PC-3 (cell line): ENCODE measurements at regions of chr14 and their contacts with region 1.

Region 1: DNA sequence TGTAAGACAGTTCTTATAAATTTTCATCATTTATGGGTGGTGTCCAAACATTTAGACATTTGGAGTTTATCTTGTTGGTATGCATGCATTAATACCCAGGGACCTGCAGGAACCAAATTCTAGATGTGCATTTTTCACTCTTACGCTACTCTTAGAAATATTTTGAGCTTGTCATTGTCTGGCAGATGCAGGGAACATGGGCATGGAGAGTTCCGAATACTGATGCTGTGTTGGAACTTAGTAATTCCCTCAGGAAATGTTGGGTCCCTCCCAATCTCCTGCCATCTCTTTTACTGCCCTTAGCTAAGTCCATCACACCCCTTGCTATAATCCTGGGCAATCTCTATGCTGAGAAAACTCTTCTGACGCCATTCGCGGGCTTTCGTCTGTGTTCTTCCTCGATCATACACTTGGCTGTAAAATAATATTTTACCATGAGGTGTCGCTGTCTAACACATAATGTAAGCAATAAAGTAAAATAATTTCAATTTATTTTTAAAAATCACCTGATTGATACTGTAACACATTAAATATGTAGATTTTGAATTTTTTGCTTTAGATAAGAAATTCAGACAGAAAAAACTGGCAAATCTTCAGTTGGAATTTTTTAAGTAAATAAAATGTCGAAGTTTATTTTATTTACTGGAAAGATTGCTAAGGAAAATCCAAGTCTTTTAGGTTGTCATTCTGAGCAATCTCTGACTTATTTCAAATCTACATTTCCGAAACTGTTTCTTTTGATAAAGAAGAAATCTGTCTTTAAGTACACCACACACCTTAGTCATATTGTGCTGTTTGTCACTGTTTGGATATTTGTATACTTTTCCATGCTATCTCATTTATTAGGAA is 304.1 kb upstream of the SSTR1 start:
- DNase-seq: peak; percentile 83
- ATAC-seq: peak; percentile 78
- H3K4me3 ChIP-seq: peak overlapping the region; percentile 18; the same call in 1 of the 2 replicates
- H3K27ac ChIP-seq: no peak overlapping the region
- H3K4me1 ChIP-seq: no peaks in the 10 kb centered on the region
- H3K27me3 ChIP-seq: peaks cover 24% of the 10 kb centered on the region; the same call in 1 of the 2 replicates
- CTCF ChIP-seq: peak; percentile 82

Region 2: DNA sequence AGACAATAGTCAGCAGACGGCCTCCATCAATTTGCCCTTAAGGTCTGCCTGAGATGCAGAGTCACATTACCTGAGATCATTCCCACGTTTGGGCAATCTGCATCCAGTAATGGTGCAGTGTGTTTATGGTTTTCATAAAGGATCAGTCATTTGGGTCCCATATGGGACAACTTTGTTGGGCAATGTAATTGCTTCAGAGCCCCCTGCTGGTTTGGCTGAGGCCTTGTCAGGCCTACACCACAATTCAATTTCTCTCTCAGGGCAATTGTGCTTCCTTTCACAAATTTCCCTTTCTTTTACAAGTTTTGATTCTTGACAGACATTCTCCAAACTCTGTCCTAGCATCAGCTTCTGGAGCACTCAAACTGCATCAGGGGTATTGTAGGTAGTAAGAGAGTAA is 112.9 kb after region 1 on chr14:
- CTCF ChIA-PET with region 1: no interaction called
- POLR2A ChIA-PET with region 1: no interaction called
- intact Hi-C with region 1: loop called (anchors 1 kb)
- DNase-seq: peak; percentile 19
- ATAC-seq: peak; percentile 35; the same call in 1 of the 2 replicates
- H3K4me3 ChIP-seq: no peak overlapping the region
- H3K27ac ChIP-seq: no peak overlapping the region
- H3K4me1 ChIP-seq: no peaks in the 10 kb centered on the region
- H3K27me3 ChIP-seq: no peaks in the 10 kb centered on the region
- CTCF ChIP-seq: peak; percentile 68

Region 3: GRCh38 chr14:38197001-38197783 is 293.6 kb after region 1 on chr14:
- CTCF ChIA-PET with region 1: no interaction called
- POLR2A ChIA-PET with region 1: no interaction called
- intact Hi-C with region 1: loop called (anchors 1 kb)
- DNase-seq: peak; percentile 24
- ATAC-seq: no peak
- H3K4me3 ChIP-seq: no peak overlapping the region
- H3K27ac ChIP-seq: no peak overlapping the region
- H3K4me1 ChIP-seq: peaks cover 25% of the 10 kb centered on the region
- H3K27me3 ChIP-seq: no peaks in the 10 kb centered on the region; the same call in 1 of the 2 replicates
- CTCF ChIP-seq: peak; percentile 75